ENCODE measurements at regions of chr17 and their contacts with region 1.

Region 1: GRCh38 chr17:81977211-81978027 is at the start of gene ASPSCR1:
- DNase-seq: peak; percentile 87
- H3K4me3 ChIP-seq: peak within 1 kb of the TSS; percentile 56 to 80 (median 61)
- H3K27ac ChIP-seq: peak within 1 kb of the TSS; percentile 90
- H3K4me1 ChIP-seq: peaks cover 5% of the 10 kb centered on the region
- H3K27me3 ChIP-seq: no peaks in the 10 kb centered on the region
- CTCF ChIP-seq: no peak
- POLR2A ChIP-seq: peak; percentile 92
- total RNA-seq, gene ASPSCR1: 30.9 and 36.5 TPM in 2 replicates

Region 2: DNA sequence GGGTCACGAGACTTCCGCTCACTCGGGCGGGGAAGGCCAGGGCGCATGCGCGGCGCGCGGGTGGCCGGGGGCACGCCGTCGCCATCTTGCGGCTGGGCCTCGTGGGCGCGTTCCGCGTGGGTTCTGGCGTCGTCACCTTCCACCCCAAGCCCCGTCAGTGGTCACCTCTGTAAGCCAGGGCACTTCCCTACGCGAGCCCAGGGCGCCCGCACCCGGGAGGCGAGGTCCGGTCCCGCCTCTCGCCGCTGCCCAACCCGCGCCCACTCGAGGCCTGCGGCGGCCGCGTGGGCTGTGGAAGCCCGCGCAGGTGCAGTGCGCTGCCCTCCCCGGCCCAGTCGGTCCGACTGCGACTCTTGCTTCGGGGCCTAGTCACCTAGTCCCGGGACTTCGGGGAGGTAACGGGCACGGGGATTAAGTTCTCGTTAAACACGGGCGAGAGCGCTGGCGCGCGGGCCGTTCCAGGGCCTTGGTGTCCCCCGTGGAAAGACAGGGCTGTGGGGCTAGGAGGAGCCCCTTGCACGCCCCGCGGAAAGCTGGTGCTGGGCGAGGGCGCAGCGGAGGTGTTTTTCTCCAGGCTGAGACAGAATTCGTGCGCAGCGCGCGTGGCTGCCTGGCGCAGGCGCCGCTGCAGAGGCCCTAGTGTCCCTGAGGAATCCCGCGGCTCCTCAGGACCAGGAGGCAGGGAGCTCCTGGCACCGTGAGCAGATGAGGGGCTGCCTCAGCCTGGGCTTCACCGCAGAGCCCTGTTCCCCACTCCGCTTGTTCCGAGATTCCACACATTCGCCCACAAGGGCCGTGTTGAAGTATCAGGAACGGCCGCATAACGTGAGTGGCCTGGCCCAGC is 105.8 kb before region 1 on chr17:
- CTCF ChIA-PET with region 1: no interaction called
- POLR2A ChIA-PET with region 1: no interaction called
- dilution Hi-C with region 1: no loop called
- intact Hi-C with region 1: no loop called
- DNase-seq: peak; percentile 81
- H3K4me3 ChIP-seq: peak overlapping the region; percentile 7 to 77 (median 50)
- H3K27ac ChIP-seq: peak overlapping the region; percentile 77
- H3K4me1 ChIP-seq: peaks cover 17% of the 10 kb centered on the region
- H3K27me3 ChIP-seq: no peaks in the 10 kb centered on the region
- CTCF ChIP-seq: peak; percentile 6 to 45
- POLR2A ChIP-seq: peak; percentile 29

Region 3: DNA sequence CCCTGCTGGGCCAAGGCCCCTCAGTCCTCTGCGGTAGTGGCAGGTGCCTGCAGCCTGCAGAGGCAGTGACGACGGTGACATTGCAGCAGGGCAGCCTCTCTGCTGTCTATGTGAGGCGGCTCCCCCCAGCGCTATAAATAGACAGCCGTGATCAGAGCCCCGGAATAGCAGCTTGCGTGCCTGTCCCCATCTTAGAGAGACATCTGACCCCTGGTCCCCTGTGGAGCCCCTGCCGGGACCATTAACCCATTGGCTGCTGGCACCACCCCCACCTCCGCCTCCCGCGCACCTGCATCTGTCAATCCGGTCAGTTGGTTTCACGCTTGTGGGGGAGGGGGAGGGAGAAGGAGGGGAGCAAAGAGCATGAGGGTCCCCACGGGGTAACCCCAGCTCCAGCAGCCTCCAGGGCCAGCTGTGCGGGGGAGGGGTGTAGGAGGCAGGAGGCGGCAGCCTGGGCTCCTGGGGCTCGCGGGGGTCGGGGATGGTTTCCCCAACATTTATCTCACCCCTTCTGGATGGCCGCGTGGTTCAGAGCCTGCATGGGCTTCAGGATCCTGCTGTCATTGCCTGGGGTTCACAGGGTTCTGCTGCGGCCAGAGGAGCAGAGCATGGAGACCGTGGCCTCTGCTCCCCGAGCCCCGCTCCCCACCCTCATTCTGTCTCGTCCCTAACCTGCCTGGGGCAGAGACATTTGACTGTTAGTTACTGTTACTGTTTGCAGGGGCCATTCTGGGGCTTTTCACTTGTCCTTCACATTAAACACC is 35.4 kb before region 1 on chr17:
- CTCF ChIA-PET with region 1: no interaction called
- POLR2A ChIA-PET with region 1: no interaction called
- dilution Hi-C with region 1: no loop called
- intact Hi-C with region 1: loop called (anchors 5 kb)
- DNase-seq: no peak
- H3K4me3 ChIP-seq: no peak overlapping the region
- H3K27ac ChIP-seq: no peak overlapping the region
- H3K4me1 ChIP-seq: no peaks in the 10 kb centered on the region
- H3K27me3 ChIP-seq: peaks cover 0 to 7% of the 10 kb centered on the region in 2 experiments
- CTCF ChIP-seq: no peak
- POLR2A ChIP-seq: no peak

Region 4: DNA sequence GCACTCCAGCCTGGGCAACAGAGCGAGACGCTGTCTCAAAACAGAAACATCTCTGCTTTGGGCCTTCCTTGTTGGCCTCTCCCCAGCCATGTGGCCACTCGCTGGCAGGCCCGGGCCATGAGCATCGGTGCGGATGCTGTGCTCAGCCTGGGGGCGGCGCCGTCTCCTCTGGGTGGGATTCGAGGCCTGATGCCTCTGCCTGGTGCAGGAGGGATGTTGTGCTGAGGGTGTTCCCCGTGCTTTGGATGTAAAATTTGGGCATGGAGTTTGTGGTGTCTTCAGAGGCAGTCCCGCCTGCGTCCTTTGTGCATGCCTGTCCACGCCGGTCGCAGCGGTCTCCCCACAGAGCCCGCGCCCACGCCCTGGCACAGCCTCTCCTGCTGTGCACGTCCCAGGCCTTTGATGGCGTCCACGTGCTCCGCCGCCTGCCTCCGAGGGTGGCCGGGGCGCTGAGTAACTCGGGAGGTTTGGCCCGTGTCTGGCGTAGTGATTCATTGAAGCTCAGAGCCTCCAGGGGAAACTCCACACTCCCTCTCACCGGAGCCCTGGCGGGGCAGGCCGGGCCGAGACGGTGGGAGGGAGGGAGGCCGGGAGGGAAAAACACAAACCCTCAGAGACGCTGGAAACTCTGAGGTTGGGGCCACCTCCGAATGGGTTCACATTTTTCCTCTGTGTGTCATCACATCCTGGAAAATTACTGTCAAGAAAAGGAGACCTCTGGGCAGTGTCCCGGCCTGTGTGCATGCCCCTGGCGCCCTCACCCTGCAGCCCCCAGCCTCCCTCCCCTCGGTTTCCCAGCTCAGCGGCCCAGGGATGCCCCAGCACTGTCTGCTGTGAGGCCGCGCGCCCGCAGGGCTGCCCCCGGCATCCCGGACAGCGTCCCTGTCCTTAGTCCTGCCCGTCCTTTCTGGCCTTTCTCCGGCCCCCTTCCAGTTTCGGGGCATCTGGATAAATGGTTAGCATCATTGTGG is 26.3 kb after region 1 on chr17:
- CTCF ChIA-PET with region 1: no interaction called
- POLR2A ChIA-PET with region 1: interaction called, 3 read pairs
- dilution Hi-C with region 1: no loop called
- intact Hi-C with region 1: loop called (anchors 1 kb)
- DNase-seq: peak; percentile 93
- H3K4me3 ChIP-seq: no peak overlapping the region
- H3K27ac ChIP-seq: peak overlapping the region; percentile 54
- H3K4me1 ChIP-seq: peaks cover 13% of the 10 kb centered on the region
- H3K27me3 ChIP-seq: no peaks in the 10 kb centered on the region
- CTCF ChIP-seq: no peak
- POLR2A ChIP-seq: no peak